Endothelial cell of umbilical vein (primary cell): ENCODE measurements at regions of chr11 and their contacts with region 1.

Region 1: DNA sequence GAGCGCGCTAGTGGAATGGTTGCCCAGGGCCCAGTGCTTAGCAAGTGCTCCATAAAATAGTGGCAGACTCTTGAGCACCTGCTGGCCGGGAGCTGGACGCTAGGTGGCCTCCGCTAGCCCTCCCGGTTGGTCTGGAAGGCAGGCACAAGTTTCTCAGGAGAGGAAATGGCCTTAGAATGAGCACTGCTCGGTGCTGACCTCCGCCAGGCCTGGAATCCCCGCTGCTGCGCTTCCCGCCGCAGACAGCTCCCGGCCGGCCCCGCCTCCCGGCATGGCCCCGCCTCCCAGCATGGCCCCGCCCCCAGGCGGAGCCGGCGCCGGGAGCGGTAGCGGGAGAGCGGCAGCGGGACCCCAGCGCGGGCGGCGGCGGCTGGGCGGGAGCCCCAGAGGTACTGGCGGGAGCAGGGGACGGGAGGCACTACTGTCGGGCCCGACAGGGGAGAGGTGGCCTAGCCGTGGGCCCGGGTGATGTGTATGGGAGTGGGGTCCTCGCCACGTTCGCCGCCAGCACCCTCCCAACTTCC is at the start of gene SIPA1:
- DNase-seq: peak; percentile 96
- H3K4me3 ChIP-seq: peak within 1 kb of the TSS; percentile 56 to 62 (median 62)
- H3K27ac ChIP-seq: peak within 1 kb of the TSS; percentile 78
- H3K4me1 ChIP-seq: peaks cover 41% of the 10 kb centered on the region
- H3K27me3 ChIP-seq: no peaks in the 10 kb centered on the region
- CTCF ChIP-seq: peak; percentile 58 to 83
- POLR2A ChIP-seq: peak; percentile 96
- total RNA-seq, gene SIPA1: 119 and 128 TPM in 2 replicates

Region 2: DNA sequence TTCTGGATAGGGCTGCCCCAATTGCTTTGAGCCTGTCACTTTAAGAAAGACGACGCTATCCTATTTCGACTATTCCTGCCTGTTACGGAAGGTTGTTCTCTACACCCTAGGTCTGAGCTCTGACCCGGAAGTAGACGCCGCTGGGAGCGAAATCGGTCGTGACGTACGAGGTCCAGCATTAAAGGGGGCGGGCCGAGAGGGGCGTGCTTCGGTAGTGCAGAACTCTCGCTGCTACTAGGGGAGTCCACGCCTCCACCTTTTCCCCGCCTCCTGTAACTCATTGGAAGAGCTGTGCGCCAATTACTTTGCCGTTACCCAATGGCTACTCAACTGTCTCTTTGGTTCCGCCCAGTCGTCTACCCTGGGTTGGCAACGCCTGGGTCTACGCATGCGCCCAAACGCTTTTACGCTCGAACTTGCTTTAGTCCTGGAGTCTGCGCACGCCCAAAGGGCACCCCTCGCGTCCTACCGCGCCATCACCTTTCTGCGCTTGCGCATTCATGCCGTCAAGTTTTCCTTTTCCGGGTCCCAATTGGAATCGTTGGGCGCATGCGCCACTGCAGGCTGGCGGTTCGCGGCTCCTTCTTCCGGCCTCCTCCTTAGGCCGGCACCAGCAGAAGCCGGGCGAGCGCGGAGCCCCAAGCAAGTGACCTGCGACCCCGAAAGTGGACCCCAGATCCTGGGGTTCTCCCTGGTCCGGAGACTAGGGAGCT is 22.5 kb before region 1 on chr11 and contains the start of gene PCNX3:
- CTCF ChIA-PET with region 1: interaction called, 5 read pairs
- POLR2A ChIA-PET with region 1: no interaction called
- dilution Hi-C with region 1: no loop called
- intact Hi-C with region 1: loop called (anchors 1 kb)
- DNase-seq: peak; percentile 100
- H3K4me3 ChIP-seq: peak within 1 kb of the TSS; percentile 81 to 90 (median 87)
- H3K27ac ChIP-seq: peak within 1 kb of the TSS; percentile 88
- H3K4me1 ChIP-seq: peaks cover 39% of the 10 kb centered on the region
- H3K27me3 ChIP-seq: no peaks in the 10 kb centered on the region
- CTCF ChIP-seq: no peak
- POLR2A ChIP-seq: peak; percentile 59
- total RNA-seq, gene PCNX3: 53.8 and 53.9 TPM in 2 replicates

Region 3: GRCh38 chr11:65625628-65626342 is 12.1 kb before region 1 on chr11:
- CTCF ChIA-PET with region 1: interaction called, 24 read pairs
- POLR2A ChIA-PET with region 1: interaction called, 3 read pairs
- dilution Hi-C with region 1: no loop called
- intact Hi-C with region 1: no loop called
- DNase-seq: peak; percentile 56
- H3K4me3 ChIP-seq: no peak overlapping the region
- H3K27ac ChIP-seq: no peak overlapping the region
- H3K4me1 ChIP-seq: no peaks in the 10 kb centered on the region
- H3K27me3 ChIP-seq: no peaks in the 10 kb centered on the region
- CTCF ChIP-seq: peak; percentile 81 to 91
- POLR2A ChIP-seq: no peak

Region 4: GRCh38 chr11:65652511-65653231 is 14.8 kb after region 1 on chr11:
- CTCF ChIA-PET with region 1: interaction called, 44 read pairs
- POLR2A ChIA-PET with region 1: interaction called, 9 read pairs
- dilution Hi-C with region 1: no loop called
- intact Hi-C with region 1: loop called (anchors 1 kb)
- DNase-seq: peak; percentile 96
- H3K4me3 ChIP-seq: peak overlapping the region in 2 of 3 experiments; percentile 25 to 49
- H3K27ac ChIP-seq: peak overlapping the region; percentile 95
- H3K4me1 ChIP-seq: peaks cover 23% of the 10 kb centered on the region
- H3K27me3 ChIP-seq: no peaks in the 10 kb centered on the region
- CTCF ChIP-seq: no peak
- POLR2A ChIP-seq: peak; percentile 76

Region 5: GRCh38 chr11:65662799-65663638 is 25.2 kb after region 1 on chr11 and contains the start of gene RELA:
- CTCF ChIA-PET with region 1: interaction called, 11 read pairs
- POLR2A ChIA-PET with region 1: interaction called, 4 read pairs
- dilution Hi-C with region 1: no loop called
- intact Hi-C with region 1: loop called (anchors 1 kb)
- DNase-seq: peak; percentile 92
- H3K4me3 ChIP-seq: peak within 1 kb of the TSS; percentile 34 to 94 (median 77)
- H3K27ac ChIP-seq: peak within 1 kb of the TSS; percentile 91
- H3K4me1 ChIP-seq: peaks cover 18% of the 10 kb centered on the region
- H3K27me3 ChIP-seq: no peaks in the 10 kb centered on the region
- CTCF ChIP-seq: no peak
- POLR2A ChIP-seq: peak; percentile 87
- total RNA-seq, gene RELA: 105 and 106 TPM in 2 replicates